ENCODE measurements at regions of chr2 and their contacts with region 1.

Region 1: GRCh38 chr2:209423562-209424198 is at the start of gene MAP2:
- DNase-seq: peak; percentile 88
- ATAC-seq: peak; percentile 95
- total RNA-seq, gene MAP2: 41.9 TPM

Region 2: DNA sequence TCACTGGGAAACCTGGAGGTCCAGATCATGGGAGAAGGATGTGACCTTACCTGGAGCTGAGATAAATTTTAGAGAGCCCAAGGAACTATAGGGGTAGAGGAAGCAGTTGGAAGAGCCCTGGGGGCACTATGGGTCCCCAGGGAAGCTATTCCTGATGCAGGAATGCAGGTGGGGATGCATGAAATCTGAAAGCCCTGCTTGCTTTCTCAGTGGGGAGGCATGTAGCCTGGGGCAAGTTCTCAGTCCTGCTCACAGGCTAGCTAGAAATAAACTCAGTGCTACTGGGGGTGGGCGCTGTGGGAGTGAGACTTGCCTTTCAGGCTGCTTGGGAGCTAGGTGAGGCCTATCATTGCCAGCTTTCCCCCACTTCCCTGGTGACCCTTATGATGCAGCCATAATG is 517.4 kb before region 1 on chr2:
- intact Hi-C with region 1: no loop called
- DNase-seq: no peak
- ATAC-seq: no peak

Region 3: DNA sequence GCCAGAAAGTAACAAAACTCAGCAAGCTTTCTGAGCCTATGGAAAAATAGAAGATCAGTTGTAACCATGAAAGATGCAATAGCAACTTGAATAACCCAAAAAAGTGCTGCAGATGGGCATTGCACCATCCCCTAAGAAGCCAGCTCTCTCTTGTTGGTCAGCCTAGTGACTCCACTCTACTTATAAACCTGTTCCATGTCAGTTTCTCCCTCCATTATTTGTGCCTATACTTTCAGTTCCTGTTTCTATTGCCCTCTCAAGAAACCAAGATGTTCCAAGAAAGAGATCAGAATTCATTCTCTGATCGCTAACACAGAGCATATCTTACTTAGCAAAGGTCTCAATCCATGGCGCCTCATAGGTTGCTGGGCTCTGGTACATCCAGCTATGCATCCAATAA is 170.1 kb before region 1 on chr2:
- intact Hi-C with region 1: no loop called
- DNase-seq: no peak
- ATAC-seq: no peak

Region 4: DNA sequence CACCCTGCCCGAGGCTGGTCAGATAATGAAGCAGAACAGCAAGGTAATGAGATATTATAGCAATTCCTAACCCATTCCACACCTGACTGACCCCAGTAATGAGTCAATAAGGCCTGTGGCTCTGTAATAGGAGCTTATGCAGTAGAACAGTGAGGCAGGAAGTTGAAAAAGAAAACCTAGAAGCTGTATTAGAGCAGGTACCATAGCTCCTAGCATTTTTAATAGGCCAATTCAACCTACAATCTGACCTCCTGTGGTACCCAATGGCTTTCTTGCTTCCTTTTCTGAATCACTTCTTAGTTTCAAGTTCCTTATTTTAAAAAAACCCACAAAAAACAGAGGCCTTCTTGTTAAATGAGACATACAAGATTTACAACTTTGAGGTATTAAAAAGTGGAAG is 43.4 kb before region 1 on chr2:
- intact Hi-C with region 1: no loop called
- DNase-seq: no peak
- ATAC-seq: no peak

Region 5: DNA sequence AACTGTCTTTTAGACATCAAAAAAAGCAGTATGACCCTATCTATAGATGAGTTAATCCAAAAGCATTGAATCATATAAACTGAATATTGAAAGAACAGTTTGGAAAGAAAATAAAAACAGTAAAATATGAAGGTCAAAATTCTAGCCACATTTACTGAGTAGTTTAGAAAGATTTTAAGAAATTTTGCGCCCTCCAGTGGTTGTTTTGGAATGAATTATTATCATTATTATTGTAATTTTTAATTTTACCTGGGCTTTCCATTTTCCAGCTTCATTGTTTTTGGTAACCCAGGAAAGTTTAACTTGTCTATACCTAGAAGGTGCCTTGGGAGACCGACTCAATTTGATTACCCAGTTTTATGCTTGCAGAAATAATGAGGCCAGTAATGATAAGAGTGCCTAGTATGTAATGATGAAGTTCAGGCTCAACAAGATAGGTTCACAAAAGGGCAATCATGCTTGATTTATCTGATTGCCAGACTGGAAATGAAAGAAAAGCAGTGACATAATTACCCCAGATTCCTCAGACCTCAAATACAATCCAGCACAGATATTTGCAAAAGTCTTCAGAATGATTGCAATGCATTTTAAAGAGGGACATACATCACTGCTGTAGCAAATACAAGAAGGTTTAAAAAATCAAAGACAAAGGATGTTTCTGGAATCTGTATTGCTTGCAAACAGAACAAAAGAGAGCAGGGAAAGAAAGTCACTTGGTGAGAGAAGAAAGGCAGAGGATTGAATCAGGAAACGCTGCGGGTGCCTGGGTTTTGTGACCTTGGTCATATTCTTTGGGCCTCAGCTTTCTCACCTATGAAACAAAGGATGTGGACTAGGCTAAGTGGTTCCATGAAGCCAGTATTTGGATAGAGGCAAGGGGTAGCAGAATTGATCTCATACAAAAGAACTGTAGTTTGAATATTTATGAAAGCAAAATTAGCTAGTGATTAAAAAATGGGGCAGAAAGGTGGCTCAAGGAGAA is 154.0 kb after region 1 on chr2:
- intact Hi-C with region 1: loop called (anchors 10 kb)
- DNase-seq: no peak
- ATAC-seq: no peak

Measured in sciatic nerve (tissue), 2 donors.